Caco-2 (cell line): ENCODE measurements at regions of chr2 and their contacts with region 1.

Region 1: DNA sequence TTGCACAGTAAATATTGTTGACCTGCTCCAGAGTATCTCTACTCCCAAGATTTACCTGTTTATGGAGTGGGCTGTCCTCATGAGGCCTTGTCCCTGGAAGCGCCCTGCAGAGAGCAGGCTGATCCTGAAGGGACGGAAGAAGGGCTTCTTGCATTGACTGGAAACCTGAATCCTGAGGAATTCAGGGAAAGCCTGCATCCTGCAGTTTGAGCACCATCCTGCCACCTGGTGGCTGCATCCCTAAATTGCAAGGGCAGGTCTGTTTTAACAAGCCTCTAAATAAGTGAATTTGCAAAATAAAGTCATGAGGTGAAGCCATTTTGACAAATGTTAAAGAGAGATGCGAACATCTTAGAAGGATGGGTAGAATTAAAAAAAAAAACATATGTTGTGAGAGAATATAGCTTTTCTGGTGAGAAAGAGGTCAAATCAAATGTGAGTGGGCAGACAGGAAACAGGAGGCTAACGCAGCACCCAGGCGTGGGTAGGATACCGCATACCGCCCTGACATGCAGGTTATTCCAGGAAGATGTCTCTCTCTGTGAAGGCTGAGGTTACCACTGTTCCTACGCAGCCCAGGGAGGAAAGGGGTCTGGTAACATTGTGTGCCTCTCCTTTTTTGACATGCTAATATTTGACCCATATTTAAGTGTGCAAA is 754.9 kb downstream of the RNF144A start:
- DNase-seq: peak; percentile 47 to 64
- H3K4me3 ChIP-seq: no peak overlapping the region
- H3K4me3 Mint-ChIP-seq: no peak overlapping the region
- H3K27ac Mint-ChIP-seq: no peak overlapping the region
- H3K4me1 ChIP-seq: no peaks in the 10 kb centered on the region
- H3K4me1 Mint-ChIP-seq: peaks cover 13% of the 10 kb centered on the region
- H3K27me3 ChIP-seq: no peaks in the 10 kb centered on the region
- H3K27me3 Mint-ChIP-seq: no peaks in the 10 kb centered on the region
- CTCF ChIP-seq: peak; percentile 63 to 66

Region 2: GRCh38 chr2:7517088-7517487 is 155.1 kb before region 1 on chr2:
- CTCF ChIA-PET with region 1: no interaction called
- POLR2A ChIA-PET with region 1: no interaction called
- intact Hi-C with region 1: loop called (anchors 10 kb)
- DNase-seq: no peak
- H3K4me3 ChIP-seq: no peak overlapping the region
- H3K4me3 Mint-ChIP-seq: no peak overlapping the region
- H3K27ac Mint-ChIP-seq: no peak overlapping the region
- H3K4me1 ChIP-seq: no peaks in the 10 kb centered on the region
- H3K4me1 Mint-ChIP-seq: no peaks in the 10 kb centered on the region
- H3K27me3 ChIP-seq: no peaks in the 10 kb centered on the region
- H3K27me3 Mint-ChIP-seq: peaks cover 20% of the 10 kb centered on the region
- CTCF ChIP-seq: no peak